ENCODE measurements at regions of chr7 and their contacts with region 1.

Region 1: DNA sequence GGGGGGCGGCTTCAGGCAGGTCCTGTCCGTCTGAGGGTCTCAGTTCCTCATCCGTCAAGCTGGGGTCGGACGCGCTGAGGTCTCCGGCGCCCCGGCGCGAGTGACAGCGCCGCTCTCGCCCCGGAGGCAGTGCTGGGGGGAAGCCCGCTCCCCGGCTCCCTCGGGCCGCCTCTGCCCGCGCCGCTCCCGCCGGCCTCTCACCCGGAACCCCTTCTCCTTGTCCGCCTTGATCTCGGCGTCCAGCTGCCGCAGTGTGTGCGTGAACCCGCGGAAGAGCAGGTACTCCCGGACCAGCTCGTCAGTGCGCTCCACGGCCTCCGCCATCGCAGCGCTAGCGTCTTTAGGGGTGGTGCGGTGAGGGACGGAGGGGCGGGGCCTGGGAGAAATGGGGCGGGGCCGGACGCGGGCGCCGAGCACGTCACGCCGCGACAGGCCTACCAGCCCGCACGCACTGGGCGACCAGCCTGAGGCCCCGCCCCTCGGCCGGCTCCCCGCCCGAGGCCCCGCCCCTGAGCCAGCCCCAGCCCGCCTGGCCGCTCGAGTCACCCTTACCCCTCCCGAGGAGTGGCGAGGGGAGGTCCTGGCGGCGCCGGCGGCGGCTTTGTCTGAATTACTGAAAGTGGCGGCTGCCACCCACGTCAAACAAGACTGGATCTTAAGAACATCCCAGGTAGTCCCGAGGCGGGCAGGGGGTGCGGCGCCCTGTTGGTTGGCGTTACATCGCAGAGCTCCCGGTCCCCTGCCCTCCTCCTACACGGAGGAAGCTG is at the start of gene WDR91:
- DNase-seq: peak; percentile 85
- ATAC-seq: peak; percentile 98
- H3K4me3 ChIP-seq: peak within 1 kb of the TSS; percentile 98
- H3K27ac ChIP-seq: peak within 1 kb of the TSS; percentile 89
- H3K4me1 ChIP-seq: 0 out of 2 replicates have a peak, but pooled peaks cover 3% of the 10 kb centered on the region
- H3K27me3 ChIP-seq: no peaks in the 10 kb centered on the region
- CTCF ChIP-seq: no peak
- POLR2A ChIP-seq: peak; percentile 92
- RAD21 ChIP-seq: 0 out of 2 replicates have a peak, but pooled peaks have one; percentile 1
- total RNA-seq, gene WDR91: 5.2 and 6.4 TPM in 2 replicates

Region 2: GRCh38 chr7:134845468-134845867 is 365.9 kb before region 1 on chr7:
- CTCF ChIA-PET with region 1: no interaction called
- POLR2A ChIA-PET with region 1: no interaction called
- dilution Hi-C with region 1: no loop called
- in situ Hi-C with region 1: no loop called
- intact Hi-C with region 1: no loop called
- DNase-seq: no peak
- ATAC-seq: no peak
- H3K4me3 ChIP-seq: no peak overlapping the region
- H3K27ac ChIP-seq: no peak overlapping the region
- H3K4me1 ChIP-seq: peaks cover 10% of the 10 kb centered on the region
- H3K27me3 ChIP-seq: no peaks in the 10 kb centered on the region
- CTCF ChIP-seq: 0 out of 2 replicates have a peak, but pooled peaks have one; percentile 22
- POLR2A ChIP-seq: no peak
- RAD21 ChIP-seq: no peak

Region 3: DNA sequence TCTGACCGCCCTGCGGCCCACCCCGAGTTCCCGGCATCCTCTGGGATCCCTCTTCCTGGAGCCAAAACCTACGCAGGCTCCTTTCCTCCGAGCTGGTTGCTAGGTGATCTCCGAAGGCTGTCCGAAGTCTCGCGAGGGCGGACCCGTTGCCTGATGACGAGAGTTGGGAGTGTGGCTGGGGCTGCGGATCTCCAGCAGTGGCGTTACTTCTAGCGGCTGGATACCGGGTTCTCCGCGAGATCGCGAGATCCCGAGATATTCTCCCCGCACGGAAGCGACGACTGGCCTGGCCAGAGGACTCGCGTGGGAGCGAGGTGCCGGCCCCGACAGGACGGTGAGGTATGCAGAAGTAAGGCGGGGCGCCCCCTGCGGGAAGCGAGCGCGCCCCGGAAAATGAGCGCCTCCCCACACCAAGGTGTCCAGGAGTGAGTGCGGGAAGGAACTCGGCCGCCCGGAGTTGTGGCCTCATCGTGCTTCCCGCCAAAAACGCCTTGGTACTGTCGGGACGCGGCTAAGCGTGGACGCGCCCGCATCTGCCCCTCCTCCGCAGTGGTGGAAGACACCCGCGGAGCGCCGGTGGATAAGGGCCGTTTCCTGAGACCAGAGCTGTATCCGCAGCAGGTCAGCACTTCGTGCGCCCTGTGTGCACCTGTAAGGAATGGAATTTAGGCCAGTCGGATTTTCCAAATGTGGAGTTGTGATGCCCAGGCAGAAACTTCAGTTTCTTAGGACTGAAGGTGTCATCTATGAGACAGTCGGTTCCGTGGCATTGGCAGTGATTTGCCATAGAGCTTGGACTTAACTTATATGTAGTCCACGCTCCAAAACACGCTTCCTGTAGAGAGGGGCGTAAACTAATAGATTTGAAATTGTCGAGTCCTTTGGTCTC is 224.8 kb before region 1 on chr7 and contains the start of gene AGBL3:
- CTCF ChIA-PET with region 1: no interaction called
- POLR2A ChIA-PET with region 1: no interaction called
- dilution Hi-C with region 1: no loop called
- in situ Hi-C with region 1: no loop called
- intact Hi-C with region 1: loop called (anchors 5 kb)
- DNase-seq: peak; percentile 94
- ATAC-seq: peak; percentile 98
- H3K4me3 ChIP-seq: peak within 1 kb of the TSS; percentile 72
- H3K27ac ChIP-seq: peak within 1 kb of the TSS; percentile 83
- H3K4me1 ChIP-seq: peaks cover 3% of the 10 kb centered on the region
- H3K27me3 ChIP-seq: no peaks in the 10 kb centered on the region
- CTCF ChIP-seq: peak; percentile 51
- POLR2A ChIP-seq: no peak
- RAD21 ChIP-seq: no peak
- total RNA-seq, gene AGBL3: 0.18 and 0.28 TPM in 2 replicates

Region 4: DNA sequence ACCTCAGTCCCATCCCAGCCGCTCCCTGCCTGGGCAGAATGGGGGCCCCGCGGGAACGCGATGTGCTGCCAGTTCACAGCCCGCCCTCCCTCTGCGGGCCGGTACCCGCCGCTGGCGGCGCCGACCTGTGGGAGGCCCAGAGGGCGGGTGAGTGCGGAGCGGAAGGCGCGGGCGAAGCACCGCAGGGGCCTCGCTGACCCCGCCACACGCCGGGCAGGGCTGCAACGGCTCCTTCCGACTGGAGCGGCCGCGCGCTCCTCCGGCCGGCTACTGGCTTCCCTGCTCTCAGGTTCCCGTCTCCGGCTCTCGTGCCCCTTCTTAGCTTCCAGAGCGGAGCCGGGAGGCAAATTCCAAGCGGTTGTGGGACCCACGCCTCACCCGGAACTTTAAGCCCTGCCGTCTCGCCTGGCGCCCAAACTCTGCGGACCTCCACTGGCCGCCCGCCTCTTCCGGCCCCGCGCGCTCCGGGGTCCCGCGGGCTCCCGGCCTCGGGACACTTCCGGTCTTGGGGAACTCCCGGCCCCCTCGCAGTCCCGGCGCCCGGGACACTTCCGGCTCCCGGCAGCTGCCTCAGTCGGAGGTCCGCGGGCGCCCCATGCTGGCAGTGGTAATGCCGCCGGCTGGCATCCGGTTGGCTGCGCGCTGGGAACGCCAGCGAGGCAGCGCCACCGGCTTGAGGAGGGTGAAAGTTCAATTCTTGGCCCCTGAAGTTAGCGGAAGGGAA is 40.9 kb before region 1 on chr7 and contains the start of gene CYREN:
- CTCF ChIA-PET with region 1: no interaction called
- POLR2A ChIA-PET with region 1: no interaction called
- dilution Hi-C with region 1: no loop called
- in situ Hi-C with region 1: no loop called
- intact Hi-C with region 1: loop called (anchors 1 kb)
- DNase-seq: peak; percentile 93
- ATAC-seq: peak; percentile 94
- H3K4me3 ChIP-seq: peak within 1 kb of the TSS; percentile 91
- H3K27ac ChIP-seq: peak within 1 kb of the TSS; percentile 96
- H3K4me1 ChIP-seq: peaks cover 12% of the 10 kb centered on the region
- H3K27me3 ChIP-seq: no peaks in the 10 kb centered on the region
- CTCF ChIP-seq: peak; percentile 83
- POLR2A ChIP-seq: peak; percentile 75
- RAD21 ChIP-seq: peak; percentile 75
- total RNA-seq, gene CYREN: 26.5 and 33.1 TPM in 2 replicates

Region 5: GRCh38 chr7:135240441-135240840 is 29.1 kb after region 1 on chr7:
- CTCF ChIA-PET with region 1: no interaction called
- POLR2A ChIA-PET with region 1: no interaction called
- dilution Hi-C with region 1: no loop called
- in situ Hi-C with region 1: no loop called
- intact Hi-C with region 1: no loop called
- DNase-seq: no peak
- ATAC-seq: no peak
- H3K4me3 ChIP-seq: no peak overlapping the region
- H3K27ac ChIP-seq: no peak overlapping the region
- H3K4me1 ChIP-seq: no peaks in the 10 kb centered on the region
- H3K27me3 ChIP-seq: peaks cover 35% of the 10 kb centered on the region
- CTCF ChIP-seq: no peak
- POLR2A ChIP-seq: no peak
- RAD21 ChIP-seq: no peak

Region 6: DNA sequence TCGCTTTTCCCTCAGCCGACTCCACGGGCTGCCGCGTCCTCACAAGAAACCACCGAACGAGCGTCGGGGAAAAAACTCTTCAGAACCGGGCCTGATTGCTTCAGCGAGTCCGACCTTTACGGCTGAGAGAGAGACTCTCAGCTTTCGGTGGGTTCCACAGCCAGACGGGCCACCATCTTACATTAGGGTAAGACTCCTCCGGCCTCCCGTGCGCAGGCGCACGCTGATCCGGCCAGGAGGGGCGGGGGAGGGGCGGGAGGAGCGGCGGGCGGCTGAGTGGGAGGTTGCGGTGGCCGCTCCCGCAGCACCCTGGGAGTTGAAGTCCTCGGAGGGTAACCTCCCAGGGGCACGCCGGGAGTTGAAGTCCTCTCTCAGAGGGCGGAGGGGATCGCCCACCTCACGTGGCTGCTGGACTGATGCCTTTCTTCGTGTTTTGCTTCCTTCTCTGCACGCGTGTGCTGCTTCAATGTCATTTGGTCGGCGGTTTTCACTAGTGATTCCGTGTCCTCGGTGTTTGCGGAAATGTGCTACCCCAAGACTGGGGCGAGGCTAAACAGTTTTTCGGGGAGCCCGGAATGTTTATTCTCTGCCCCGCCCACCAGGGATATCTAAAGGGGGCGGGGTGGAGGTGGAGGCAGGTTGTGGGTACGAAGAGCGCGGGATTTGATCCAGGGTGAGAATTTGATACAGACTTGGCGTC is 298.7 kb after region 1 on chr7 and contains the start of gene CNOT4:
- CTCF ChIA-PET with region 1: no interaction called
- POLR2A ChIA-PET with region 1: no interaction called
- dilution Hi-C with region 1: no loop called
- in situ Hi-C with region 1: no loop called
- intact Hi-C with region 1: loop called (anchors 5 kb)
- DNase-seq: peak; percentile 92
- ATAC-seq: peak; percentile 97
- H3K4me3 ChIP-seq: peak within 1 kb of the TSS; percentile 92
- H3K27ac ChIP-seq: peak within 1 kb of the TSS; percentile 96
- H3K4me1 ChIP-seq: no peaks in the 10 kb centered on the region
- H3K27me3 ChIP-seq: no peaks in the 10 kb centered on the region
- CTCF ChIP-seq: no peak
- POLR2A ChIP-seq: peak; percentile 93
- RAD21 ChIP-seq: no peak
- total RNA-seq, gene CNOT4: 8.1 and 10.0 TPM in 2 replicates

Measured in IMR-90 (cell line).